CD14-positive monocyte (primary cell): ENCODE measurements at regions of chr22 and their contacts with region 1.

Region 1: GRCh38 chr22:26589845-26590736 is at the start of gene TPST2:
- DNase-seq: peak; percentile 57 to 77 (median 66)
- H3K4me3 ChIP-seq: peak within 1 kb of the TSS; percentile 75 to 98 (median 86)
- H3K4me3 Mint-ChIP-seq: peak within 1 kb of the TSS; percentile 92 to 97
- H3K27ac ChIP-seq: peak within 1 kb of the TSS; percentile 79 to 88
- H3K27ac Mint-ChIP-seq: peak within 1 kb of the TSS; percentile 93 to 98 (median 97)
- H3K4me1 ChIP-seq: peaks cover 57 to 58% of the 10 kb centered on the region in 2 donors
- H3K4me1 Mint-ChIP-seq: peaks cover 61% of the 10 kb centered on the region
- H3K27me3 ChIP-seq: no peaks in the 10 kb centered on the region
- H3K27me3 Mint-ChIP-seq: no peaks in the 10 kb centered on the region
- CTCF ChIP-seq: no peak
- polyA plus RNA-seq, gene TPST2: 62.8 to 83.8 (median 69.5) TPM

Region 2: DNA sequence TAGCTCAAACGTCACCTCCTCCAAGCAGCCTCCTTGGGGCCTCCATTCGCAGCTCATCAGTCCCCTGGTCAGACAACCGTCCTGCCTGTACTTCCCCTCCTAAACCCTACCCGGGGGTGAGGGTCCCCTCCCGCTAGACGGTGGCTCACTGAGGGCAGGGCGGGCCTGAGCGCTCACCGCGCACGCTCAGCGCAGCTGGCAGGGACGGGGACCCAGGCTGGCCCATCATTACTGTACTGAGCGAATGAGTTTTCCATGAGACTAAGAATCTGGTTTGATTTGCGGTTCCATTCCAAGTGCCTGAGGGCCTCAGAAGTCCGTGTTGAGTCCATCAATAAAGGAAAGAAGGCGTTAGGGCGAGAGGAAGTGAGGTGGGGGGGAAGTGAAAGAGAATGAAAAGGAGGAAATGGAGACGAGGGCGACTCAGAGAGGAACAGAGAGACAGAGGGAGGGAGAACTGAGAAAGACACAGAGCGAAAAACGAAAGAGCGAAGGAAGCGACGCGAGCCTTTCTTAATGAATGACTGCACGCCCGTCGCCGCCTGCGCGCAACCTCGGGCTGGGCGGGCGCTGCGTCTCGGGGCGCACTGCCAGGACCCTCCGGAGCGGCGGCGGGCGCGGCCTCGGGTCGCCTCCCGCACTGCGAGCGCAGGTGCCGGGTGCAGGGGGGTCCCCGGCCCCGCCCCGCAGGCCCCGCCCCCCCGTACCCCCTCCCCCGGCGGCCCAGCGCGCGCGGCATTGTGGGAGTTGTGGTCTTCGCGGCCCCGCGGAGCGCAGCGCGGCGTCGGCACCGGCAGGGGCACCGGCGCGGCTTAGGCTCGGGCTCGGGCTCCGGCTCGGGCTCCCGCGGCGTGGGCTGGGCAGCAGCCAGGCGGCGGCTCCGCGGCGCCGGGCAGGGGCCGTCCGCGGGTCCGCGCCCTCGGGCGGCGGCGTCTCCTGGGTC is 161.3 kb before region 1 on chr22 and contains the start of gene ASPHD2:
- intact Hi-C with region 1: loop called in 1 of 2 experiments (anchors 5 kb)
- DNase-seq: peak; percentile 66 to 88 (median 82)
- H3K4me3 ChIP-seq: peak within 1 kb of the TSS; percentile 50 to 78 (median 57)
- H3K4me3 Mint-ChIP-seq: peak within 1 kb of the TSS; percentile 92 to 99
- H3K27ac ChIP-seq: peak within 1 kb of the TSS; percentile 85 to 86
- H3K27ac Mint-ChIP-seq: peak within 1 kb of the TSS; percentile 90 to 98 (median 97)
- H3K4me1 ChIP-seq: peaks cover 52 to 53% of the 10 kb centered on the region in 2 donors
- H3K4me1 Mint-ChIP-seq: peaks cover 53% of the 10 kb centered on the region
- H3K27me3 ChIP-seq: no peaks in the 10 kb centered on the region
- H3K27me3 Mint-ChIP-seq: peaks cover 3 to 5% (median 4%) of the 10 kb centered on the region in 3 donors
- CTCF ChIP-seq: no peak
- polyA plus RNA-seq, gene ASPHD2: 2.6 to 6.2 (median 4.1) TPM

Region 3: DNA sequence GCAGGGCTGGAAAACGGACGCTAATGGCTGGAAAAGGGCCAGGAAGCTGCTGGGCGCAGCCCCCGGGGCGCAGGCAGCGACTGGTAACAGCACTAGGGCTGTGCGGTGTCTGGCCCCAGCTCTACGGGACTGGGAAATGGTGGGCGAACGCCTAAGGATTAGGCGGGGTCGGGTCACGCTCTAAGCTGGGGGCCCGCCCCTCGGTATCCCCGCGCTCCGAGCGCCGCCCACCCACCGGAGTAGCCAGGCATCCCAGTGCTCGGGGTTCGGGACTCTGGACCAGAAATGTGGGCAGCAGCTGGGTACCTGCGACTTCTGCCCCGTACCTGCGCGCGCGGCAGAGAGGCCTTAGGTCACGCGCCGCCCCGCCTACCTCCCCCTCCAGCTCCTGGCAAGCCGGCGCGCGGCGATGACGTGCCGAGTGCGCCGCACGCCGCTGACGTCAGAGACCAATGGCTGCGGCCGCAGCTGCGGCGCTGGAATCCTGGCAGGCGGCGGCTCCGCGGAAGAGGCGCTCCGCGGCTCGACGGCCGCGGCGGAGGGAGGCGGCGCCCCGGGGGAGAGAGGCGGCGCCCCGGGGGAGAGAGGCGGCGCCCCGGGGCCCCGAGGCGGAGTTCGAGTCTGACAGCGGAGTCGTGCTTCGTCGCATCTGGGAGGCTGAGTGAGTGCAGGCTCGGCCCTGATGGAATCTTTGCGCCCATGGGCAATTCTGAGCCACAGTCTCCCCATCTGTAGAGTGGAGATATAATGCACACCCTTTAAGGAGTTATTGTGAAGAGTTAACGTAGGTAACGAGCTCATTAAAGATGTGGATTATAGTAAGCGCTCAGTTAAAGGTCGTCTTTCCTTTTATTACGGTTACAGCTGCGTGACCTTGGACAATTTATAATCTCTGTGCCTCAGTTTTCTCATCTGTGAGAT is 106.4 kb before region 1 on chr22 and contains the starts of genes HPS4 and SRRD:
- intact Hi-C with region 1: loop called in 1 of 2 experiments (anchors 5 kb)
- DNase-seq: peak; percentile 90 to 91 (median 91)
- H3K4me3 ChIP-seq: peak within 1 kb of the TSS; percentile 70 to 96 (median 88)
- H3K4me3 Mint-ChIP-seq: peak within 1 kb of the TSS; percentile 83 to 94
- H3K27ac ChIP-seq: peak within 1 kb of the TSS; percentile 76 to 98
- H3K27ac Mint-ChIP-seq: peak within 1 kb of the TSS; percentile 93 to 98 (median 97)
- H3K4me1 ChIP-seq: peaks cover 54 to 59% of the 10 kb centered on the region in 2 donors
- H3K4me1 Mint-ChIP-seq: peaks cover 61% of the 10 kb centered on the region
- H3K27me3 ChIP-seq: no peaks in the 10 kb centered on the region
- H3K27me3 Mint-ChIP-seq: no peaks in the 10 kb centered on the region
- CTCF ChIP-seq: no peak
- polyA plus RNA-seq, gene HPS4: 5.7 to 21.6 (median 7.5) TPM
- polyA plus RNA-seq, gene SRRD: 3.7 to 15.0 (median 10.0) TPM

Region 4: GRCh38 chr22:26511857-26512793 is 78.0 kb before region 1 on chr22 and contains the start of gene TFIP11:
- intact Hi-C with region 1: loop called in 1 of 2 experiments (anchors 5 kb)
- DNase-seq: peak; percentile 87 to 90 (median 89)
- H3K4me3 ChIP-seq: peak within 1 kb of the TSS; percentile 70 to 97 (median 74)
- H3K4me3 Mint-ChIP-seq: peak within 1 kb of the TSS; percentile 98 to 100
- H3K27ac ChIP-seq: peak within 1 kb of the TSS; percentile 44 to 96
- H3K27ac Mint-ChIP-seq: peak within 1 kb of the TSS; percentile 98 to 100 (median 99)
- H3K4me1 ChIP-seq: peaks cover 17 to 20% of the 10 kb centered on the region in 2 donors
- H3K4me1 Mint-ChIP-seq: peaks cover 19% of the 10 kb centered on the region
- H3K27me3 ChIP-seq: no peaks in the 10 kb centered on the region
- H3K27me3 Mint-ChIP-seq: peaks cover 0 to 2% (median 1%) of the 10 kb centered on the region in 3 donors
- CTCF ChIP-seq: no peak
- polyA plus RNA-seq, gene TFIP11: 10.1 to 25.5 (median 19.8) TPM

Region 5: DNA sequence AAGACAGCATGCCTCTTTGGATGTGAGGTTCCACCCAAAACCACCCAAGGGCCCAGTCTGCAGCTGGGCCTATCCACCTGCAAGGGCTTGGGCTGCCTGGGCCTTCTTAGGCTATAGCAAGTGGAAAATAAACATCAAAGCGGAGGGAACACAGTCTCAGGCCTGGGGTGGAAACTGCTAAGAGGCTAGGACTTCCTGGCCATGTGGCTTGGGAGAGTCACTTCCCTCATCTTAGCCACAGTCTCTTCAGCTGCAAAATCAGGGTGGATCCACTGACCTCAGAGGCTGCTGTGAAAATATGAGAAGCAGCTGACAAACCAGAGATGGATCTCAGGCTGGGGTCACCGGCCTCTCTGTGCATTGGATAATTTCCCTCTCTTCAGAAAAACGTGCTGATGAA is 47.3 kb before region 1 on chr22:
- intact Hi-C with region 1: loop called in 1 of 2 experiments (anchors 5 kb)
- DNase-seq: peak; percentile 50 to 61 (median 51)
- H3K4me3 ChIP-seq: peak overlapping the region in 1 of 3 experiments; percentile 36
- H3K4me3 Mint-ChIP-seq: peak overlapping the region; percentile 43 to 46
- H3K27ac ChIP-seq: peak overlapping the region; percentile 74 to 81
- H3K27ac Mint-ChIP-seq: peak overlapping the region; percentile 81 to 95 (median 89)
- H3K4me1 ChIP-seq: peaks cover 36 to 44% of the 10 kb centered on the region in 2 donors
- H3K4me1 Mint-ChIP-seq: peaks cover 40% of the 10 kb centered on the region
- H3K27me3 ChIP-seq: no peaks in the 10 kb centered on the region
- H3K27me3 Mint-ChIP-seq: peaks cover 0 to 5% (median 0%) of the 10 kb centered on the region in 3 donors
- CTCF ChIP-seq: no peak

Region 6: DNA sequence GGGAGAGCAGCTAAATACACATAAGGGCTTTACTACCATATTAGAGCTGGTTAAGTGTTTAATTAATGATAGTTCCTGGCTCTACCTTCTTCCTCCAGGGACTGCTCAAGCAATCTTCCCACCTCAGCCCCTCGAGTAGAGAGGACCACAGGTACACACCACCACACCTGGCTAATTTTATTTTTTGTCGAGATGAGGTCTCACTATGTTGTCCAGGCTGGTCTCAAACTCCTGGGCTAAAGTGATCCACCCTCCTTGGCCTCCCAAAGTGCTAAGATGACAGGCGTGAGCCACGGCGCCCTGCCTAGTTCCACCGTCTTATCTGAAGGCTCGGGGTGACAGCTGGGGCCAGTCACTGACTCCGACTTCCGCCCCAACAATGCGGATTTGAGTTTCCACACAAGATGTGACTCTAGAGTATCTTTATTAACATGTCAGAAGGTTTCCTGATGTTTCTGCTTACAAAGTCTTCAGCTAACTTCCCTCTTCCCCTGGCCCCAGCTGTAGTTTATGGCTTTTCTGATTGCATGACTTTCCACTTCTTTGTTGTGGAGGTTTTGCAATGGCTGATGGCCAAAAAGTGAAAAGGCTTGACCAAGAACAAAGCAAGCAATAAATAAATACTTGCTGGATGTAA is 16.9 kb before region 1 on chr22:
- intact Hi-C with region 1: loop called in 1 of 2 experiments (anchors 2 kb)
- DNase-seq: peak; percentile 85 to 93 (median 89)
- H3K4me3 ChIP-seq: peak overlapping the region in 1 of 3 experiments; percentile 49
- H3K4me3 Mint-ChIP-seq: peak overlapping the region; percentile 54 to 76
- H3K27ac ChIP-seq: peak overlapping the region; percentile 78 to 89
- H3K27ac Mint-ChIP-seq: peak overlapping the region; percentile 94 to 98 (median 96)
- H3K4me1 ChIP-seq: peaks cover 63 to 72% of the 10 kb centered on the region in 2 donors
- H3K4me1 Mint-ChIP-seq: peaks cover 86% of the 10 kb centered on the region
- H3K27me3 ChIP-seq: no peaks in the 10 kb centered on the region
- H3K27me3 Mint-ChIP-seq: peaks cover 0 to 5% (median 2%) of the 10 kb centered on the region in 3 donors
- CTCF ChIP-seq: no peak

Region 7: DNA sequence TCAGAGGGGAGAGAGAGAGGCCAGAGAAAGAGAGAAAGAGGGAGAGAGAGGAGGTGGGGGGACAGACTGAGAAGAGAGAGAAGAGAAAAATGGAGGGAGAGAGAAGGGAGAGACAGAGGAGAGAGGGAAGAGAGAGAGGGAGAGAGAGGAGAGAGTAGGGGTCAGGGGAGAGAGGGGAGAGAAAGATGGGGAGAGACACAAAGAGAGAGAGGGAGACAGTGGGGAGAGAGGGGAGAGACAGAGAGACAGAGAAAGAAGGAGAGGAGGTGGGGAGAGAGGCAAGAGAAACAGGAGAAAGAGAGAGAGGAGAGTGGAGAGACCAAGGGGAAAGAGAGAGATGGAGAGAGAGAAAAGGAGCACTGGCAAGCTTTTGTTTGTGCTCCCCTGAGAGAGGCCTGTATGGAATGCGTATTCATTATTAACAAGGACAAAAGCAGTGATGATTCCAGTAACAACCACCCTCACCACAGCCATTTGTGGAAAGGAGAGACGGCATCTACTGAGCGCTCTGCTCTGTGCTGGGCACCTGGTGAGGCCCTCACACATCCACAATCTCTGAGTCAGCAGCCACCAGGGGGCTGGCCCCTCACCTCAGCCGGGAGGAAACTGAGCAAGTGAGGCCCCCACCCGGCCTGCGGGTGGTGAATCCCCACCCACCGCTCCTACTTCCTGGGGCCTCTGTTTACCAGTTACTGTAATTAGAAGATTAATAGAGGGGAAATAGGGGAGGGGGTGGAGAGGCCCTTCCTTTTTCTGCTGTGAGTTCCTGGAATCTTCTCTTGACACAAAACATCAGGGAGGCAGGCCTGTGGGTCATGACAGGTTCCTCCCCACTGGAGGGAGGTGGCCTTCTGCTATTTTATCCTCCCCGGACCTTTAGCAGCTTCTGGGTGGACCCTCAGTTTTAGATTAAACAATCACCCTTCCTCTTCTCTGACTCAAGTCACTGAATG is 52.6 kb after region 1 on chr22:
- intact Hi-C with region 1: no loop called
- DNase-seq: no peak
- H3K4me3 ChIP-seq: no peak overlapping the region
- H3K4me3 Mint-ChIP-seq: peak overlapping the region in 1 of 2 donors; percentile 35
- H3K27ac ChIP-seq: no peak overlapping the region
- H3K27ac Mint-ChIP-seq: peak overlapping the region in 2 of 7 donors; percentile 33 to 57
- H3K4me1 ChIP-seq: peaks cover 18 to 23% of the 10 kb centered on the region in 2 donors
- H3K4me1 Mint-ChIP-seq: peaks cover 31% of the 10 kb centered on the region
- H3K27me3 ChIP-seq: no peaks in the 10 kb centered on the region
- H3K27me3 Mint-ChIP-seq: peaks cover 2 to 10% (median 2%) of the 10 kb centered on the region in 3 donors
- CTCF ChIP-seq: no peak

Region 8: DNA sequence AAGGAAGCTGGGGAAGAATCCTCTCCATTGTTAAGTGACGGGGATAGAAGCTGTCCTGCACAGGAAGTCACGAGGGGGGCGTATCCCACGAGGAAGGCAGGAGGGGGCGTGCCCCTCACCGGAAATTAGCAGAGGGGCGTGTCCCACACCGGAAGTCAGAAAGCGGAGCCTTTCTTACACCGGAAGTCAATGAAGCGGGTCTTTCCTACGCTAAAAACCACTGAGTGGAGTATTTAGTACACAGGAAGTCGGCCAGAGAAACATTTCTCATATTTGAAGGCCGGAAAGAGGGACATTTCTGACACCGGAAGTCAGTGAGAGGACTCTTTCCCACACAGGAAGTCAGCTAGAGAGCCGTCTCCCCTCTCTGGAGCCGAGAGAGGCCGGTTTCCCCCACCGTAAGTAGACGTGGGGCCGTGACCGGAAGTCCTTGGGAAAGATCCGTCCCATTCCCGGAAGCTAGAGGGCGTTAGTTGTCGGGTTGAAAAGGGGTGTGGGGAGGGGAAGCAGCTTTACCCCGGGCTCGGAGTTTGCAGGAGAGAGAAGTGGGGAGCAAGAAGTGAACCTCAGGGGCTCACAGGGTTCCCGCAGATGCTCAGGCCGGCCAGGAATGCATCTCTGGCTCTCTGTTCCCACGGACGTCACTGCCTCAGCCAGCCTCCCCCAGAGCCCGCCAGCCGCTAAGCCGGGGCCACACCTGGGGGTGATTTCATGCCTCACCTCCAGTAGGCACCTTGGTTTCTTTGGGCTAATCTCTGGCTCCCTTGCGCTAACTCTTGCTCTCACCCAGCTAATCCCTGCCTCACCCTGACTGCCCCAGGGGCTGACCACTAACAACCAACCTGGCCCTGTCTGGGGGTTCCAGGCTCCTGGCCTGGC is 82.7 kb after region 1 on chr22:
- intact Hi-C with region 1: loop called in 1 of 2 experiments (anchors 10 kb)
- DNase-seq: peak; percentile 93 to 95 (median 94)
- H3K4me3 ChIP-seq: peak overlapping the region; percentile 69 to 83 (median 69)
- H3K4me3 Mint-ChIP-seq: peak overlapping the region; percentile 86 to 95
- H3K27ac ChIP-seq: peak overlapping the region; percentile 89 to 92
- H3K27ac Mint-ChIP-seq: peak overlapping the region; percentile 95 to 99 (median 99)
- H3K4me1 ChIP-seq: peaks cover 42 to 47% of the 10 kb centered on the region in 2 donors
- H3K4me1 Mint-ChIP-seq: peaks cover 52% of the 10 kb centered on the region
- H3K27me3 ChIP-seq: no peaks in the 10 kb centered on the region
- H3K27me3 Mint-ChIP-seq: peaks cover 0 to 2% (median 0%) of the 10 kb centered on the region in 3 donors
- CTCF ChIP-seq: no peak